PC-3 (cell line): ENCODE measurements at regions of chr5 and their contacts with region 1.

Region 1: DNA sequence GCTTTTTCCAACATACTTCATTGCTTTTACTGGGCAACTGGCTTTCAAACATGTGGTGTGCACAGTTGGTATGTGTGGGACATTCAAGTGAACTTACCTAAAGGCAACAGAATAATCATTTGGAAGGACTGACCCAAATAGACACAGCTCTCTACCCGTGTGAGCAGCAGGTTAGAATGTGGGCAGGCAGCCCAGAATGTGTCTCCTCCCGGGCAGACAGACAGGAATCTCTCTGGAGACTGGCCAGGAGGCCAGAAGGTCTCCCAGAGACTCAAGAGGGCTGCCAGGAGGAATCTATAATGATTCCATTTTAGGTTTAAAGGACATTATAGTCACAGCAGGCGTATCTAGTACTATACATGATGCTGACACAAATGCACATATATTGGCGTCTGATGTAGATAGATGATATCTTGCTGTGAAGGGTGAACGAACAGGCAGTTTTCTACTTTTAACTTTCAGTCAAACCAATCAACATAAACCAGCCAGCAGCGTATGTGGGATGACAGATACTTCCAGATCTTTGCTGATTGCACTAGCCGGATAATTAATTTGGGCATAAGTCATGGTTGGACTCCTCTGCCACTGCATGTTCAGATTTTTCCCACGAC is 297.4 kb upstream of the ZNF608 start:
- DNase-seq: peak; percentile 92
- ATAC-seq: peak; percentile 58
- H3K4me3 ChIP-seq: no peak overlapping the region
- H3K27ac ChIP-seq: peak overlapping the region; percentile 74
- H3K4me1 ChIP-seq: peaks cover 50% of the 10 kb centered on the region
- H3K27me3 ChIP-seq: no peaks in the 10 kb centered on the region
- CTCF ChIP-seq: no peak

Region 2: DNA sequence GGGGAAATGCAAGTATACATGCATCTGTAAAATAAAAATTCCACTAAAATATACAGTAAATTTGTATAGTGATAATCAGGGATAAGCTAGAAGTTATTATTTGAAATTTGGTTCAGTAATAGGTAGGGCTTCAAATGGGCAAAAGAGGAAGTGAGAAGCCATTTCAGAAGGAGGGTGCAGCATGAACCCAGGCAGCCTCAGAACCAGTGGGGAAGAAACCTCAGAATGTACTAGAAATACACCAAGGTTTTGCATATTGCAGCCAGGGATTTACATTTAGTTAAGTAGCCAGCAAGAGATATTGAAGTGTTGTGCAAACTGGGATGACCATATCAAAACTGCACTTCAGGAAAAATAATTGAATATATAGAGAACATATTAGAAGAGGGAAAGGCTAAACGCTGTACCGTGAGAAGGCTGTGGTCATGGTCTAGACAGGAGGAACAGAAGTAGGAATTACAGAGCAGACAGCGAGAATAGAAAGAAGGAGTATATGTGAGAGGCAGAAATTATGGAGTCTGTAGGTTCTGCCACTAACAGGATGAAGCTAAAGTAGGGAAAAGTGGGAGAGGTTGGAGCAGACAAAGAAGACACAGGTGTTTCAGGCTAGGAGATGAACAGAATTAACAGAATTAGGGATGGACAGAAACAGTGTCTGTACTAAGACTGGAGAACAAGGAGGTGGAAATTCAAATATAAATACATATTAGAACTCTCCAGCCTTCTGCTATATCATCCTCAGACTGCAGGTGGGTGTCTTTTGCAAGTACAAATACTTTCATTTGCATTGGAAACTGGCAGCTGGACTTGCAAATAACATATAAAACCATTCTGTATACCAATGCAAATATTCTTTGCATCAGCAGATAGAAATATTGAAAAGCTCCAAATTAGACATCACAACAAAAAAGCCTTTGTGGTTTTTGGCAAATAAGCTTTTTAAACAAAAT is 633.1 kb before region 1 on chr5:
- CTCF ChIA-PET with region 1: no interaction called
- POLR2A ChIA-PET with region 1: no interaction called
- intact Hi-C with region 1: loop called (anchors 10 kb)
- DNase-seq: no peak
- ATAC-seq: peak; percentile 24; the same call in 1 of the 2 replicates
- H3K4me3 ChIP-seq: no peak overlapping the region
- H3K27ac ChIP-seq: no peak overlapping the region
- H3K4me1 ChIP-seq: no peaks in the 10 kb centered on the region
- H3K27me3 ChIP-seq: no peaks in the 10 kb centered on the region
- CTCF ChIP-seq: no peak

Region 3: DNA sequence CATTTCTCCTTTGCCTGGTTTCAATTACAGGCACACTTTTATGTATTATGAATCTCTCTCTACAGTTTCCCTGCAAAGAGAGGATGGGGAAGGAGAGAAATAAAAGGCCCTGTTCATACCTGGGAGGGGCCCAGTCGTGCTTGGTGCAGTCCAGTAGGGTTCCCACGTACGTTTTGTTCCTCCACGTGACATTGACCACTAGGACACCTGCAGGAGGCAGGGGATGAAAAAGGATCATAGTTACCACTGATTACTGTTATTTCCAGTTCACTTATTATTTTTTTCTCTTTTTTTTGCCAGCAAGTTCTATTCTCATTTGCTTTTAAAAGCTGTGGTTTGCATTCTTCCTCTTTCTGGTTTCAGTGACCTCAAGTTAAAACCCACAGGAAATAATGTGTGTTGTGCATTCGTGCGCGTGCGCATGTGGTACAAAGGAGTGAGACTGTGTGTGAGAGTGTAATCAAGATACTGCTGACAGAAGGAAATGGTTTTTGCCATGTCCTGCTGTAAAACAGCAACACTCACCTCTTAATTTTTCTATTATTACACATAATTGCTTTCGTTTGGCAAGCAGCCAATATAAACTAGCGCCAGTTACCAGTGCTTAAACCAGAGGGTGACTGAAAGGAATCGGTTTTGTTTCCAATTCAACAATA is 394.3 kb before region 1 on chr5:
- CTCF ChIA-PET with region 1: no interaction called
- POLR2A ChIA-PET with region 1: no interaction called
- intact Hi-C with region 1: loop called (anchors 10 kb)
- DNase-seq: peak; percentile 70
- ATAC-seq: peak; percentile 45
- H3K4me3 ChIP-seq: peak overlapping the region; percentile 29; the same call in 1 of the 2 replicates
- H3K27ac ChIP-seq: 0 out of 2 replicates have a peak overlapping the region, but pooled peaks have one; percentile 10
- H3K4me1 ChIP-seq: peaks cover 32% of the 10 kb centered on the region
- H3K27me3 ChIP-seq: no peaks in the 10 kb centered on the region
- CTCF ChIP-seq: no peak

Region 4: GRCh38 chr5:124996764-124997077 is 47.2 kb before region 1 on chr5:
- CTCF ChIA-PET with region 1: no interaction called
- POLR2A ChIA-PET with region 1: no interaction called
- intact Hi-C with region 1: loop called (anchors 1 kb)
- DNase-seq: peak; percentile 4
- ATAC-seq: no peak
- H3K4me3 ChIP-seq: no peak overlapping the region
- H3K27ac ChIP-seq: no peak overlapping the region
- H3K4me1 ChIP-seq: peaks cover 18% of the 10 kb centered on the region
- H3K27me3 ChIP-seq: no peaks in the 10 kb centered on the region
- CTCF ChIP-seq: no peak

Region 5: GRCh38 chr5:125176009-125176477 is 132.2 kb after region 1 on chr5:
- CTCF ChIA-PET with region 1: no interaction called
- POLR2A ChIA-PET with region 1: no interaction called
- intact Hi-C with region 1: loop called (anchors 5 kb)
- DNase-seq: peak; percentile 87
- ATAC-seq: peak; percentile 94
- H3K4me3 ChIP-seq: no peak overlapping the region
- H3K27ac ChIP-seq: peak overlapping the region; percentile 79
- H3K4me1 ChIP-seq: peaks cover 21% of the 10 kb centered on the region
- H3K27me3 ChIP-seq: no peaks in the 10 kb centered on the region
- CTCF ChIP-seq: no peak

Region 6: GRCh38 chr5:125277494-125278154 is 233.7 kb after region 1 on chr5:
- CTCF ChIA-PET with region 1: no interaction called
- POLR2A ChIA-PET with region 1: no interaction called
- intact Hi-C with region 1: loop called (anchors 10 kb)
- DNase-seq: peak; percentile 93
- ATAC-seq: peak; percentile 96
- H3K4me3 ChIP-seq: no peak overlapping the region; the same call in 1 of the 2 replicates
- H3K27ac ChIP-seq: peak overlapping the region; percentile 70
- H3K4me1 ChIP-seq: peaks cover 34% of the 10 kb centered on the region
- H3K27me3 ChIP-seq: no peaks in the 10 kb centered on the region
- CTCF ChIP-seq: no peak

Region 7: DNA sequence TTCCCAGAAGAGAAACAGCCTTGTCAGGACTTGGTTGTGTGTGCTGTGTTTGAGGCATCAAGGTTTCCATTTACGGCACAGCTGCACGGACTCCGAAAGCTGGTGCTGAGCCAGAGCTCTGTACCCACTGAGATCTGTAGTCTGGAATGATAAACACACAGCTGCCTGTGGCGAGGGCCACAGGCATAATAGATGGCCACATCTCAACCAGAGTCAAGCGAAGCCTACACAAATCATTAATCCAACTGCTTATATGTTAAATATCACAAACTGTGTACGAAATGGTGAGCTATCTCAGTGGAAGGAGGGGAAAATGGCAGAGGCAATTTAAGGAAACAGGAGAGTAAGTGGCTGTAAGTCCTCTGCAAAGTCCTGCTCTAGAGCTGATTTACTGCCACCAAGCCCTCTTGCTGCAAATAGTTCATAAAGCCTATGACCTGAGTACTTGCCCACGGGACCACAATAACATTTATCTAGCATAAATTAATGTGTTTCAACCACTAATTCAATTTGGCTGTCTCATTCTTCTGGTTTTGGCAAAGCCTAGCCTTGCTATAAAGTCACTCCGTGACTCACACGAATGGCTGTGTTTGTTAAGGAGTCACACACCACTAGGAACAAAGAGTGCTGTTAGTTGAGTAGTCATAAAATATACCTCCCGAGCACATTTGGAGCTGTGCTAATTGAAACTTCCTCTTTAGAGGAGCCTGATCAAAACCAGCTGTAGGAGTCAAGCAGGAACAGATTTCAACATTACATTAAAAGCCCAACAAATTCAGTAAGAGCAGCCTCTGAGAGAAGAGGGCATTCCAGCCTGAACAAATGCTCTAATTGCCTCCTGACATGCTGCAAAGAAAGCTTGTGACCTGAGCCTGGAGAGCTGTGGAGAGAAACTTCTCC is 441.1 kb after region 1 on chr5:
- CTCF ChIA-PET with region 1: no interaction called
- POLR2A ChIA-PET with region 1: no interaction called
- intact Hi-C with region 1: loop called (anchors 10 kb)
- DNase-seq: peak; percentile 87
- ATAC-seq: peak; percentile 90
- H3K4me3 ChIP-seq: peak overlapping the region; percentile 58
- H3K27ac ChIP-seq: peak overlapping the region; percentile 93
- H3K4me1 ChIP-seq: peaks cover 32% of the 10 kb centered on the region
- H3K27me3 ChIP-seq: no peaks in the 10 kb centered on the region
- CTCF ChIP-seq: no peak